Activated CD4-positive, alpha-beta memory T cell treated with anti-CD3 and anti-CD28 coated beads for 36 hours (primary cell): ENCODE measurements at regions of chr19 and their contacts with region 1.

Region 1: GRCh38 chr19:9309139-9309973 is at the start of gene ZNF699:
- DNase-seq: peak; percentile 99
- H3K4me3 Mint-ChIP-seq: peak within 1 kb of the TSS; percentile 92
- H3K27ac Mint-ChIP-seq: peak within 1 kb of the TSS; percentile 89
- H3K4me1 Mint-ChIP-seq: peaks cover 12% of the 10 kb centered on the region
- H3K27me3 Mint-ChIP-seq: no peaks in the 10 kb centered on the region
- total RNA-seq, gene ZNF699: 5.8 to 6.8 TPM

Region 2: DNA sequence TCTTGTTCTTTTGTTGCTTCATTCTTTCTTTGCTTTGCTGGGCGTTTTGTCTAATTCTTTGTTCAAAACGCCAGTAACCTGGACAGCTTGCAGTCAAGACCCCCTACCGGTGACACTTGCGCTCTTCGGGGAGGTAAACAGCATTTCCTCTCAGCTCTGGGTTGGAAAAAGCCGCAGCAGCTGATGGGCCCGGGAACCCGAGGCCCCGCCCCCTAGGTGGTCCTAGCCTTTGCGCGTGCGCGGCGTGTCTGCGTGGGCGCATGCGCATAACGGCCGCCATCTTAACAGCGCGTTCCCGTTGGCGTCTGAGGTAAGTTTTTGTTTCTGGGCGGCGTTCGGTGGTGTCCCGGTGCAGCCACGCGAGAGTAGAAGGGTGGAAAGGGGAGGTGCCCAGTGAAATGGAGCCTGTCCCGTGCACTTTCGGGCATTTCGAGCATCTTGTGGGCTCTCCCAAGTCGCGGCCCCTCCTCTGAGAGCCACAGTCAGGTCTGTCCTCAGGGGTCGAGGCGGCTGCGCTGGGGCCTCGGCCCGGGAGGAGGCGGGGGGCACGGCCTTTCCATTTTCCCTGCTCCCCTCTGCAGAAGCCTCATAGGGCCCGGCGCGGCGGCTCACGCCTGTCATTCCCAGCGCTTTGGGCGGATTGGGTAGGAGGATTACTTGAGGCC is 14.7 kb after region 1 on chr19 and contains the start of gene ZNF559:
- CTCF ChIA-PET with region 1: interaction called, 14 read pairs
- POLR2A ChIA-PET with region 1: interaction called, 3 read pairs
- intact Hi-C with region 1: loop called (anchors 1 kb)
- DNase-seq: peak; percentile 98
- H3K4me3 Mint-ChIP-seq: peak within 1 kb of the TSS; percentile 83
- H3K27ac Mint-ChIP-seq: peak within 1 kb of the TSS; percentile 92
- H3K4me1 Mint-ChIP-seq: peaks cover 24% of the 10 kb centered on the region
- H3K27me3 Mint-ChIP-seq: no peaks in the 10 kb centered on the region
- total RNA-seq, gene ZNF559: 8.0 to 9.4 TPM

Region 3: GRCh38 chr19:9342610-9343304 is 33.4 kb after region 1 on chr19:
- CTCF ChIA-PET with region 1: no interaction called
- POLR2A ChIA-PET with region 1: no interaction called
- intact Hi-C with region 1: no loop called
- DNase-seq: no peak
- H3K4me3 Mint-ChIP-seq: no peak overlapping the region
- H3K27ac Mint-ChIP-seq: no peak overlapping the region
- H3K4me1 Mint-ChIP-seq: no peaks in the 10 kb centered on the region
- H3K27me3 Mint-ChIP-seq: no peaks in the 10 kb centered on the region

Region 4: GRCh38 chr19:9370738-9371619 is 61.6 kb after region 1 on chr19:
- CTCF ChIA-PET with region 1: no interaction called
- POLR2A ChIA-PET with region 1: no interaction called
- intact Hi-C with region 1: no loop called
- DNase-seq: no peak
- H3K4me3 Mint-ChIP-seq: no peak overlapping the region
- H3K27ac Mint-ChIP-seq: no peak overlapping the region
- H3K4me1 Mint-ChIP-seq: no peaks in the 10 kb centered on the region
- H3K27me3 Mint-ChIP-seq: no peaks in the 10 kb centered on the region

Region 5: GRCh38 chr19:9435279-9436268 is 126.2 kb after region 1 on chr19 and contains the start of gene ZNF266:
- CTCF ChIA-PET with region 1: interaction called, 8 read pairs
- POLR2A ChIA-PET with region 1: no interaction called
- intact Hi-C with region 1: loop called (anchors 1 kb)
- DNase-seq: peak; percentile 96
- H3K4me3 Mint-ChIP-seq: peak within 1 kb of the TSS; percentile 94
- H3K27ac Mint-ChIP-seq: peak within 1 kb of the TSS; percentile 98
- H3K4me1 Mint-ChIP-seq: peaks cover 33% of the 10 kb centered on the region
- H3K27me3 Mint-ChIP-seq: no peaks in the 10 kb centered on the region
- total RNA-seq, gene ZNF266: 20.0 to 23.4 TPM

Region 6: GRCh38 chr19:9538183-9539058 is 229.1 kb after region 1 on chr19 and contains the start of gene ZNF426:
- CTCF ChIA-PET with region 1: no interaction called
- POLR2A ChIA-PET with region 1: no interaction called
- intact Hi-C with region 1: loop called (anchors 1 kb)
- DNase-seq: peak; percentile 93
- H3K4me3 Mint-ChIP-seq: peak within 1 kb of the TSS; percentile 96
- H3K27ac Mint-ChIP-seq: peak within 1 kb of the TSS; percentile 94
- H3K4me1 Mint-ChIP-seq: peaks cover 9% of the 10 kb centered on the region
- H3K27me3 Mint-ChIP-seq: no peaks in the 10 kb centered on the region
- total RNA-seq, gene ZNF426: 11.4 to 12.5 TPM